ENCODE measurements at regions of chr4 and their contacts with region 1.

Region 1: GRCh38 chr4:40185830-40186664 is 10.8 kb upstream of the RHOH start:
- DNase-seq: no peak
- H3K4me3 Mint-ChIP-seq: no peak overlapping the region
- H3K27ac Mint-ChIP-seq: no peak overlapping the region
- H3K4me1 Mint-ChIP-seq: peaks cover 48% of the 10 kb centered on the region
- H3K27me3 Mint-ChIP-seq: no peaks in the 10 kb centered on the region

Region 2: GRCh38 chr4:40134203-40134917 is 51.7 kb before region 1 on chr4:
- intact Hi-C with region 1: no loop called
- DNase-seq: no peak
- H3K4me3 Mint-ChIP-seq: no peak overlapping the region
- H3K27ac Mint-ChIP-seq: no peak overlapping the region
- H3K4me1 Mint-ChIP-seq: peaks cover 9% of the 10 kb centered on the region
- H3K27me3 Mint-ChIP-seq: no peaks in the 10 kb centered on the region

Region 3: GRCh38 chr4:40173470-40173875 is 12.6 kb before region 1 on chr4:
- intact Hi-C with region 1: loop called (anchors 2 kb)
- DNase-seq: no peak
- H3K4me3 Mint-ChIP-seq: peak overlapping the region; percentile 45
- H3K27ac Mint-ChIP-seq: peak overlapping the region; percentile 37
- H3K4me1 Mint-ChIP-seq: peaks cover 21% of the 10 kb centered on the region
- H3K27me3 Mint-ChIP-seq: peaks cover 8% of the 10 kb centered on the region

Measured in activated T-helper 1 cell treated with anti-CD3 and anti-CD28 coated beads, Interleukin-12 subunit alpha, Interleukin-12 subunit beta, Interleukin-2, Interleukin-4 antibody, amounts not matched to agents 30 ng/mL and 10 ng/mL and 1 ng/mL, durations not matched to agents 14 hours and 24 hours and 36 hours (primary cell).